ENCODE measurements at regions of chr2 and their contacts with region 1.

Region 1: DNA sequence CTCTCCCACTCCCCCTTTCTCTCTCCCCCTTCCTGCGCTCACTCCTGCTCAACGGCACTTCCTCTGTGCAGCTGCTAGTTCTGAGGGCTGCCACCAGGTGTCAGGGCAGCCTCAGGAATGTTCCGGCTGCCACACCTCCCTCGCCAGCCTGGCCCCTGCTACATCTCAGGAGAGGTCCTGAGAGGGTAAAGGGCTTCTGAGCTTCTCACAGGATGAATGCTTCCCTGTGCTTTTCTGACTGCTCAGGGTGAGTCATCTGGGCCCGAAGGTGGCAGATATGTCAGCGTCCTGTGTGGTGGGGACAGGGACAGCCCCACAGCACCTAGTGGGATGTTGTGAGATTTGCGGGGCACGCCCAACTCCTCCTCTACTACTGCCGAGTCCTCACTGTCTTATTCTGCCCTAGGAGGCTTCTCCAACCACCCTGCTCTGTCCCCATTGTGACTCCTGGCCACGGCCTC is 49.0 kb downstream of the PLEKHB2 start:
- DNase-seq: peak; percentile 93
- H3K4me3 Mint-ChIP-seq: no peak overlapping the region
- H3K27ac Mint-ChIP-seq: no peak overlapping the region
- H3K4me1 Mint-ChIP-seq: peaks cover 27% of the 10 kb centered on the region
- H3K27me3 Mint-ChIP-seq: no peaks in the 10 kb centered on the region

Region 2: DNA sequence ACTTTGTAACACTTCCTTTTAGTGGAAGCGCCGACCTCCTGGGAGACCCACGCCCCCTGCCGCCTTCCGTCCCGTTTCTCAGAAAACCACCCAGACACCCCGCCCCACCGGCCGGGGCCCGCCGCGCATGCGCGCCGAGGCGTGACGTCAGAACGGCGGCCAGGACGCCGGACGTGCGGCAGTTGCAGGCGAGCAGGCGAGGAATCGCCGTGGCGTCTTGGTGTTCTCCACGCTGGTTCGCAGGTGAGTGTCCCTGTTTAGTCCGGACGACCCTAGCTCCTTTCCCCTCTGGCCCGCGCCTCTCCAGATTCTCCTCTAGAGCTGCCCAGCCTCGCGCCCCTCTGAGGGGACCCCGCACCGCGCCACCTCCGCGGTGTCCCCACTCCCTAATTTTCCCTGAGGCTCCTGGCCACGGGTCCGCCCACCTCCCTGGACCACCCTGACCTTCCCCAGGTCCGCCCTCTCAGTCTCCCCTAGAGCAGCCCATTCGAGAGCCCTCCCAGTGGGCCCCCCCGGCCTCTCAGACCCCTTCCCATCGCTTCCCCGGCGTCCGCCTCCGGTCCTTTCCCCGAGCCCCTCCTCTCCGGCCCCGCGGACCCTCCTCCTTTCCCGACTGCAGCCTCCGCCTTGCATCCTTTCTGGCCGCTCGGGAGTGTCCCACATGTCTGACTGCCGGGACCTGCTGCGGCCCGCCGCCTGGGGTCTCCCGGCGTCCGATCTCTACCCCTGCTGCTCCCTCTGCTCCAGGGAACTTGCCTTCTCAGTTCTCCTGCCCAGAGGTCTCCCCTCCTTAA is 48.7 kb before region 1 on chr2 and contains the start of gene PLEKHB2:
- CTCF ChIA-PET with region 1: interaction called, 3 read pairs
- POLR2A ChIA-PET with region 1: interaction called, 3 read pairs
- intact Hi-C with region 1: loop called (anchors 1 kb)
- DNase-seq: peak; percentile 95
- H3K4me3 Mint-ChIP-seq: peak within 1 kb of the TSS; percentile 85
- H3K27ac Mint-ChIP-seq: peak within 1 kb of the TSS; percentile 89
- H3K4me1 Mint-ChIP-seq: peaks cover 42% of the 10 kb centered on the region
- H3K27me3 Mint-ChIP-seq: no peaks in the 10 kb centered on the region
- total RNA-seq, gene PLEKHB2: 50.0 to 52.2 TPM

Region 3: GRCh38 chr2:131413148-131413747 is 259.1 kb after region 1 on chr2:
- CTCF ChIA-PET with region 1: interaction called, 7 read pairs
- POLR2A ChIA-PET with region 1: no interaction called
- intact Hi-C with region 1: loop called (anchors 2 kb)
- DNase-seq: no peak
- H3K4me3 Mint-ChIP-seq: no peak overlapping the region
- H3K27ac Mint-ChIP-seq: no peak overlapping the region
- H3K4me1 Mint-ChIP-seq: no peaks in the 10 kb centered on the region
- H3K27me3 Mint-ChIP-seq: peaks cover 49% of the 10 kb centered on the region

Region 4: DNA sequence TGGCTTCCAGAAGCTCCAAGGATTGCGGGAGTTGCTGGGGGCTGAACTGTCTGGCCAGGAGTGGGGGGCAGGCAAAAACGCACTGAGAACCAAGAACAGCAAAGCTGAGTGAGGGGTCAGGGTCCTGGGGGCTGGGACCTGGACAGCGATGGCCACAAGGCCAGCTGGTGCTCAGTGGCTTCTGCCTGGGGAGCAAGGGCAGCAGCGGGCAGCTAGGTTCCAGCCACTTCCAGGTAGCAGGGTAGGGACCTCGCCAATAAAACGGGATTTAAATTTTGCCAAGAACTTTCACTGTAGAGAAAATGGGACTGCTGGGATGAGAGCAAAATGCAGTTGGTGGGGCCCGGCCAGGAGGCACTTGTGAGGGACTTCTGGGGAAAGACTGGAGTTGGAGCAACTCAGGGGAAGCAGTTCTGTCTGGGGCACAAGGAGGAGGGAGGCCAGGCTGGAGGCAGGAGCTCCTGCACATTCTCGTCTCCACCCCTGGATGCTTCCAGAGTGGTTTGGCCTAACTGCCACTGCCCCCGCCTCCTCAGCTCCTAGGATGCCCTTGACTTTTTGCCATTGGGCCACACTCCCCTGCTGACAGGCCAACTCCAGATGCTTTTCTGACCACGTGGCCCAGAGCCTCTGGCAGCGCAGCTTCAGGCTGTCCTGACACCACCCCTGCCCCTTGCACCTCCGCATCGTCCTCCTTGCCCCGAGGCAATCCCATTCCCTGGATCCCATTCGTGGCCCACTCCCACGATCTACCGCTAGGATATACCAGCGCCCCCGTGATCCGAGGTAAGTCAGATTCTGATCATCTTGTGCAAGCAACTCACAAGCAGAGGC is 368.1 kb after region 1 on chr2:
- CTCF ChIA-PET with region 1: no interaction called
- POLR2A ChIA-PET with region 1: no interaction called
- intact Hi-C with region 1: loop called (anchors 1 kb)
- DNase-seq: no peak
- H3K4me3 Mint-ChIP-seq: no peak overlapping the region
- H3K27ac Mint-ChIP-seq: no peak overlapping the region
- H3K4me1 Mint-ChIP-seq: peaks cover 2% of the 10 kb centered on the region
- H3K27me3 Mint-ChIP-seq: no peaks in the 10 kb centered on the region

Region 5: DNA sequence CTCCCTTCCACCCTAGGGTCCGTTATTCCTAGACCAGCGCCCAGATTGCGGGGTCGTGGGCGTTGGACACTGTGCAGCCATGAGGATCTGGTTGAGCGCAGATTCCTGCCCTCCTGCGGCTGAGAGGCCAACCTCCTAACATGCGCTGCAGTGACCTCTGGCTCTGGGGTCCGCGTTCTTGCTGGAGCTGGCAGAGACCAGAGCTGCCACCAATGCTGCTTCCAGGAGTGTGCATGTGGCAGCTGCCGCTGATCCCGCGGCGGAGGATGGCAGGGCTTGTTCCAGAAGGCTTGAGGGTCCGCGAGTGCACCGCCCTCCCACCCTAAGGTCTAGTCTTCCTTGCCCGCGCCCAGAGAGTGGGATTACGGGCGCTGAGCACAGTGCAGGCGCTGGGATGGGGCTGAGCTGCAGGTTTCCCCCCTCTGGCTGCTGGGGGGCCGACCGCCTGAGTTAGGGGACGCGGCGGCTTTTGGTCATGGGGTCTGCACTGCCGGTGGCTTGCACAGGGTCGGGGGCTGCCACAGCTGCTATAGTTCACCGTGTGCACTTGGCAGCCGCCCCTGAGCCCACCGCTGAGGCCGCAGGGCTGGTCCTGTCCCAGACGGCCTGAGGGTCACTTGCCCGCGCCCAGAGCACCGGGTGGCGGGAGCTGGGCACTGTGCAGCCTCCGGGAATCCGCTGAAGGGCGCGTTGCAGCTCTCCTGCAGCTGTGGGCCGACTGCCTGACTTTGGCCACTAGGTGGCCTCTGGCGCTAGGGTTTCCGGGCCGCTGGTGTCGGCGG is 519.5 kb after region 1 on chr2:
- CTCF ChIA-PET with region 1: interaction called, 54 read pairs
- POLR2A ChIA-PET with region 1: no interaction called
- intact Hi-C with region 1: loop called (anchors 1 kb)
- DNase-seq: peak; percentile 82
- H3K4me3 Mint-ChIP-seq: peak overlapping the region; percentile 20
- H3K27ac Mint-ChIP-seq: no peak overlapping the region
- H3K4me1 Mint-ChIP-seq: peaks cover 2% of the 10 kb centered on the region
- H3K27me3 Mint-ChIP-seq: peaks cover 27% of the 10 kb centered on the region

Measured in activated CD4-positive, alpha-beta memory T cell treated with anti-CD3 and anti-CD28 coated beads for 36 hours (primary cell).